ENCODE measurements at regions of chr18 and their contacts with region 1.

Region 1: GRCh38 chr18:49768051-49768391 is 45.3 kb downstream of the ACAA2 start:
- DNase-seq: peak; percentile 65
- H3K4me3 ChIP-seq: no peak overlapping the region
- H3K27ac ChIP-seq: no peak overlapping the region
- H3K4me1 ChIP-seq: no peaks in the 10 kb centered on the region
- H3K27me3 ChIP-seq: no peaks in the 10 kb centered on the region
- CTCF ChIP-seq: peak; percentile 87 to 95

Region 2: GRCh38 chr18:49510393-49511115 is 257.5 kb before region 1 on chr18:
- CTCF ChIA-PET with region 1: interaction called, 3 read pairs
- dilution Hi-C with region 1: no loop called
- in situ Hi-C with region 1: loop called in 1 of 2 experiments (anchors 10 kb)
- intact Hi-C with region 1: loop called (anchors 1 kb)
- DNase-seq: peak; percentile 46
- H3K4me3 ChIP-seq: no peak overlapping the region
- H3K27ac ChIP-seq: no peak overlapping the region
- H3K4me1 ChIP-seq: no peaks in the 10 kb centered on the region
- H3K27me3 ChIP-seq: no peaks in the 10 kb centered on the region
- CTCF ChIP-seq: peak; percentile 92 to 93

Region 3: GRCh38 chr18:49550621-49551339 is 217.2 kb before region 1 on chr18:
- CTCF ChIA-PET with region 1: no interaction called
- dilution Hi-C with region 1: no loop called
- in situ Hi-C with region 1: loop called in 1 of 2 experiments (anchors 10 kb)
- intact Hi-C with region 1: no loop called
- DNase-seq: no peak
- H3K4me3 ChIP-seq: no peak overlapping the region
- H3K27ac ChIP-seq: no peak overlapping the region
- H3K4me1 ChIP-seq: peaks cover 6% of the 10 kb centered on the region
- H3K27me3 ChIP-seq: no peaks in the 10 kb centered on the region
- CTCF ChIP-seq: no peak

Region 4: GRCh38 chr18:49561289-49562193 is 206.5 kb before region 1 on chr18 and contains the start of gene LIPG:
- CTCF ChIA-PET with region 1: no interaction called
- dilution Hi-C with region 1: no loop called
- in situ Hi-C with region 1: loop called (anchors 10 kb)
- intact Hi-C with region 1: loop called (anchors 1 kb)
- DNase-seq: peak; percentile 97
- H3K4me3 ChIP-seq: peak within 1 kb of the TSS; percentile 40 to 70 (median 61)
- H3K27ac ChIP-seq: peak within 1 kb of the TSS; percentile 65
- H3K4me1 ChIP-seq: peaks cover 28% of the 10 kb centered on the region
- H3K27me3 ChIP-seq: no peaks in the 10 kb centered on the region
- CTCF ChIP-seq: no peak
- total RNA-seq, gene LIPG: 78.8 to 153 TPM

Region 5: GRCh38 chr18:49656073-49656591 is 111.9 kb before region 1 on chr18:
- CTCF ChIA-PET with region 1: no interaction called
- dilution Hi-C with region 1: no loop called
- in situ Hi-C with region 1: no loop called
- intact Hi-C with region 1: loop called (anchors 5 kb)
- DNase-seq: peak; percentile 99
- H3K4me3 ChIP-seq: no peak overlapping the region
- H3K27ac ChIP-seq: no peak overlapping the region
- H3K4me1 ChIP-seq: peaks cover 14% of the 10 kb centered on the region
- H3K27me3 ChIP-seq: no peaks in the 10 kb centered on the region
- CTCF ChIP-seq: no peak